ENCODE measurements at regions of chr7 and their contacts with region 1.

Region 1: GRCh38 chr7:138981332-138982203 is at the start of gene KIAA1549:
- DNase-seq: no peak
- ATAC-seq: peak; percentile 95
- H3K4me3 ChIP-seq: peak within 1 kb of the TSS; percentile 78 to 90
- H3K27ac ChIP-seq: peak within 1 kb of the TSS; percentile 81
- H3K4me1 ChIP-seq: peaks cover 22% of the 10 kb centered on the region
- H3K27me3 ChIP-seq: no peaks in the 10 kb centered on the region
- CTCF ChIP-seq: peak; percentile 82
- total RNA-seq, gene KIAA1549: 14.1 TPM

Region 2: GRCh38 chr7:138886501-138886917 is 95.1 kb before region 1 on chr7:
- CTCF ChIA-PET with region 1: interaction called, 3 read pairs
- POLR2A ChIA-PET with region 1: no interaction called
- in situ Hi-C with region 1: no loop called
- intact Hi-C with region 1: loop called (anchors 10 kb)
- DNase-seq: no peak
- ATAC-seq: no peak
- H3K4me3 ChIP-seq: no peak overlapping the region
- H3K27ac ChIP-seq: 0 out of 2 replicates have a peak overlapping the region, but pooled peaks have one; percentile 40
- H3K4me1 ChIP-seq: peaks cover 39% of the 10 kb centered on the region
- H3K27me3 ChIP-seq: no peaks in the 10 kb centered on the region
- CTCF ChIP-seq: peak; percentile 77